Activated T-helper 1 cell treated with anti-CD3 and anti-CD28 coated beads, Interleukin-12 subunit alpha, Interleukin-12 subunit beta, Interleukin-2, Interleukin-4 antibody, amounts not matched to agents 30 ng/mL and 10 ng/mL and 1 ng/mL, durations not matched to agents 14 hours and 24 hours and 36 hours (primary cell): ENCODE measurements at regions of chr12 and their contacts with region 1.

Region 1: GRCh38 chr12:9673404-9674225 is 4.1 kb downstream of the CLEC2D start:
- DNase-seq: no peak
- H3K4me3 Mint-ChIP-seq: peak overlapping the region; percentile 90
- H3K27ac Mint-ChIP-seq: peak overlapping the region; percentile 97
- H3K4me1 Mint-ChIP-seq: peaks cover 73% of the 10 kb centered on the region
- H3K27me3 Mint-ChIP-seq: no peaks in the 10 kb centered on the region

Region 2: GRCh38 chr12:9634177-9634803 is 39.3 kb before region 1 on chr12:
- intact Hi-C with region 1: loop called (anchors 1 kb)
- DNase-seq: peak; percentile 64
- H3K4me3 Mint-ChIP-seq: peak overlapping the region; percentile 60
- H3K27ac Mint-ChIP-seq: peak overlapping the region; percentile 63
- H3K4me1 Mint-ChIP-seq: peaks cover 60% of the 10 kb centered on the region
- H3K27me3 Mint-ChIP-seq: peaks cover 3% of the 10 kb centered on the region

Region 3: GRCh38 chr12:9687228-9687627 is 13.6 kb after region 1 on chr12:
- intact Hi-C with region 1: loop called (anchors 1 kb)
- DNase-seq: no peak
- H3K4me3 Mint-ChIP-seq: no peak overlapping the region
- H3K27ac Mint-ChIP-seq: peak overlapping the region; percentile 44
- H3K4me1 Mint-ChIP-seq: peaks cover 79% of the 10 kb centered on the region
- H3K27me3 Mint-ChIP-seq: no peaks in the 10 kb centered on the region

Region 4: DNA sequence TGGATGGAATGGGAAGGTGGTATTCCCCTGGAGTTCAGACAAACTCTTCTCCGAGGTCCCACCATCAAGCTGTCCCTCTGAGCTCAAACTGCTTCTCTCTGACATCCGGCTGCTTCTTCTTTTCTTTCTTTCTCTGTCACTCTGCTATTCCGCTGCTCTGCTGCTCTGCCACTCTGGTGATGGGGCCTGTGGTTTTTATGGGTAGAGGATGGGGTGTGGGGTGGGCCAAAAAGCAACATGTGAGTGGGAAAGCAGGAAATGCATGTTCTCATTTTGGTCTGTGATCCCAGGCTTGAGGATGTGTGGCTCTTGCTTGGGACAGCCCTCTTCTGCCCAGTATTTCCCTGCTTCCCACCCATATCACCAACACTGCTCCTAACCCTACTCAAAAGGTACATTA is 28.6 kb after region 1 on chr12:
- intact Hi-C with region 1: loop called (anchors 2 kb)
- DNase-seq: peak; percentile 58
- H3K4me3 Mint-ChIP-seq: peak overlapping the region; percentile 58
- H3K27ac Mint-ChIP-seq: peak overlapping the region; percentile 81
- H3K4me1 Mint-ChIP-seq: peaks cover 79% of the 10 kb centered on the region
- H3K27me3 Mint-ChIP-seq: no peaks in the 10 kb centered on the region

Region 5: DNA sequence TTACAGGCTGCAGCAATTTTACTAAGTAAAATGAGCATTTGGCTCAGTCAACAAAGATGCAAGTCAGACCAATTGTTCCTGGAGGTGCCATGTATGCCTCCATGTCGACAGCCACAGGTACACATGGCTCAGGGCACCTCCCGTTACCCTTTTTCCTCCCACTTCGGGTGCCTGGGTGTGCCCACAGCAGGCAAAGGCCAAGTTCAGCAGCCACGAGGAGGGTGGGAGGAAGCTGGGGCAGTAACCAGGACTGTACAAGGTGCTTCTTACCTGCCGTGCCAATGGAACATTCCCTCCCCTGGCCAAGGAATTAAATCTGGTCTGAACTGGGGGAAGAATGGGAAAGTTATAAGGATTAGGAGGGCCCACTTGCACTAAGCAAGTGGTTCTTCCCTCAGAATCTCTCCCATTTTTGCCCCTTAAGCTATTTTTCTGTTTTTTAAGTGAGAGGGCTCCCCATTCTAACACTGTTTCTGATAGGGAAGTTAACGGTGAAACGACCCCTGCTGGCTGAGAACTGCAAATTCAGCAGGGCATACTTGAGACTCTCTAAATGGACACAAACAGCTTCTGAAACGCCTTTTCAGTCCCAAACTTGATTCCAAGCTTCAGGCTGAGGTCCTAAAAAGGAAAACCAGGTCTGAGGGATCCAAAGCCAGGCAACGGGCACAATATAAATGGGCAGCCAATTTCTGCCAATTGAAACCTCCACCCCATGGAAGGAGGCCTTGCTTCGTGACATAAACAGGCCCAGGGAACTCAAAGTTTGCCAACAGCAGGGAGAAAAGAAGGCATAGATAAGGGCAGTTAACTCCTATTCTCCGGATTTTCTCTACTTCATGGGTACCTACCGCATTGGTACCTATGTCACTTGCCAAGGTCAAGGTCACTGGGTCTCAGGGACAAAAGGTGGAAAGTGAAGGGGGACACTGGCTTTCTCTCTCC is 34.5 kb after region 1 on chr12:
- intact Hi-C with region 1: loop called (anchors 1 kb)
- DNase-seq: peak; percentile 48
- H3K4me3 Mint-ChIP-seq: peak overlapping the region; percentile 57
- H3K27ac Mint-ChIP-seq: peak overlapping the region; percentile 90
- H3K4me1 Mint-ChIP-seq: peaks cover 56% of the 10 kb centered on the region
- H3K27me3 Mint-ChIP-seq: no peaks in the 10 kb centered on the region

Region 6: GRCh38 chr12:9732921-9733461 is 59.4 kb after region 1 on chr12 and contains the start of gene CLECL1:
- intact Hi-C with region 1: loop called (anchors 1 kb)
- DNase-seq: no peak
- H3K4me3 Mint-ChIP-seq: peak within 1 kb of the TSS; percentile 87
- H3K27ac Mint-ChIP-seq: peak within 1 kb of the TSS; percentile 89
- H3K4me1 Mint-ChIP-seq: peaks cover 76% of the 10 kb centered on the region
- H3K27me3 Mint-ChIP-seq: no peaks in the 10 kb centered on the region
- total RNA-seq, gene CLECL1: 7.6 and 9.1 TPM in 2 replicates

Region 7: DNA sequence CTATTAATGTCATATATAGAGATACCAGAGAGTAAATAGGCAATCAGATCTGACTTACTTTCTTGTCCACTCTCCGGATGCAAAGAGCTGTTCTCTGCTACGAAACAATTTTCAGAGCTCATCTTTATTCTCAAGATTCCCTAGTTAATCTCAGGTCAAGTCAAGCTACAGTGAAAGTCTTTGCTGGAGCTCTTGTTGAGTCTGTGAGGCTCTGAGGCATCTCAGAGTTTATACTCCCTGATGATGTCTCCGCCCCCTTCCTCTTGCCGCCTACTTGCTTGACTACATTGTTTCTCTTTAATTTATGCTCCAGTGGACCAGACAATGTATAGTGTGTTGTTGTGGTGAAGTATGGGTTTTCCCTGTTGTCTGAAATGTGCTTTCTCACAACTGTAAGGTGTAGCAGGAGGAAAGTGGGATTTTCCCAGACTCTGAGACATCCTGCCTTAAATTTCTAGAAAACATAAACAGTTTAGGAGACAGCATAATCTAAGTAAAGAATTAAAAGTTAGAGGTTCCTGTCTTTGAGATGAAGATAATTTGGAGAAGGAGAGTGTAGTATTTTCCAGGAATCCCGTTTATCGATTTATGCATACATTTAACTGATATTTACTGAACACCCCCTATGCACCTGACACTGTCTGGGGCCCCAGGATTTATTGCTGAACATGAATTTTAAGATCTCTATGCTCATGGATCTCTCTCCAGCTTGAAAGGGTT is 87.2 kb after region 1 on chr12 and contains the start of gene CD69:
- intact Hi-C with region 1: loop called (anchors 1 kb)
- DNase-seq: peak; percentile 81
- H3K4me3 Mint-ChIP-seq: peak within 1 kb of the TSS; percentile 98
- H3K27ac Mint-ChIP-seq: peak within 1 kb of the TSS; percentile 97
- H3K4me1 Mint-ChIP-seq: peaks cover 68% of the 10 kb centered on the region
- H3K27me3 Mint-ChIP-seq: peaks cover 6% of the 10 kb centered on the region
- total RNA-seq, gene CD69: 90.5 and 93.2 TPM in 2 replicates

Region 8: DNA sequence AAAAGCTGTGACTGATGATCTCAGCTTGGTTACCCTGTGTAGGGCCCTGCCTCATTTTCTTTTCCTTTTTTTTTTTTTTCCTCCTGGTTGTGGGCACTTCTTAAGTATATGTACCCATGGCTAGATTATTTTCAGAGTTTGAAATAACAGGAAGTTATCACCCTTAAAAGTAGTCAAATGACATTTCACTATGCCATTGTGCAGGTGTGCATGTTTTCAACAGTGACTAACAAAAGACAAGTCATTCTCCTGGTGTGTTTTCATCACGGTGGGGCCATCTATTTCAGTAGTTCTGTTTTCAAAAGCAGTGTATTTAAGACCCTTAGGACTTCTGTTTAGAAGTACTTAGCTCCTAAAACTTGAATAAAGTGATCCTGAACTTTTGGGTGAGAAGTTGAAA is 554.0 kb after region 1 on chr12:
- intact Hi-C with region 1: no loop called
- DNase-seq: no peak
- H3K4me3 Mint-ChIP-seq: no peak overlapping the region
- H3K27ac Mint-ChIP-seq: no peak overlapping the region
- H3K4me1 Mint-ChIP-seq: peaks cover 10% of the 10 kb centered on the region
- H3K27me3 Mint-ChIP-seq: no peaks in the 10 kb centered on the region